ENCODE measurements at regions of chr7 and their contacts with region 1.

Region 1: GRCh38 chr7:122616951-122617350 is 82.0 kb downstream of the RNF133 start:
- DNase-seq: no peak
- H3K4me3 Mint-ChIP-seq: no peak overlapping the region
- H3K27ac Mint-ChIP-seq: no peak overlapping the region
- H3K4me1 Mint-ChIP-seq: no peaks in the 10 kb centered on the region
- H3K27me3 Mint-ChIP-seq: no peaks in the 10 kb centered on the region

Region 2: GRCh38 chr7:121113288-121113687 is 1503.7 kb before region 1 on chr7:
- intact Hi-C with region 1: loop called (anchors 5 kb)
- DNase-seq: no peak
- H3K4me3 Mint-ChIP-seq: no peak overlapping the region
- H3K27ac Mint-ChIP-seq: no peak overlapping the region
- H3K4me1 Mint-ChIP-seq: no peaks in the 10 kb centered on the region
- H3K27me3 Mint-ChIP-seq: peaks cover 17% of the 10 kb centered on the region

Region 3: GRCh38 chr7:122643250-122643649 is 26.3 kb after region 1 on chr7:
- intact Hi-C with region 1: no loop called
- DNase-seq: no peak
- H3K4me3 Mint-ChIP-seq: no peak overlapping the region
- H3K27ac Mint-ChIP-seq: no peak overlapping the region
- H3K4me1 Mint-ChIP-seq: no peaks in the 10 kb centered on the region
- H3K27me3 Mint-ChIP-seq: no peaks in the 10 kb centered on the region